PC-3 (cell line): ENCODE measurements at regions of chr16 and their contacts with region 1.

Region 1: DNA sequence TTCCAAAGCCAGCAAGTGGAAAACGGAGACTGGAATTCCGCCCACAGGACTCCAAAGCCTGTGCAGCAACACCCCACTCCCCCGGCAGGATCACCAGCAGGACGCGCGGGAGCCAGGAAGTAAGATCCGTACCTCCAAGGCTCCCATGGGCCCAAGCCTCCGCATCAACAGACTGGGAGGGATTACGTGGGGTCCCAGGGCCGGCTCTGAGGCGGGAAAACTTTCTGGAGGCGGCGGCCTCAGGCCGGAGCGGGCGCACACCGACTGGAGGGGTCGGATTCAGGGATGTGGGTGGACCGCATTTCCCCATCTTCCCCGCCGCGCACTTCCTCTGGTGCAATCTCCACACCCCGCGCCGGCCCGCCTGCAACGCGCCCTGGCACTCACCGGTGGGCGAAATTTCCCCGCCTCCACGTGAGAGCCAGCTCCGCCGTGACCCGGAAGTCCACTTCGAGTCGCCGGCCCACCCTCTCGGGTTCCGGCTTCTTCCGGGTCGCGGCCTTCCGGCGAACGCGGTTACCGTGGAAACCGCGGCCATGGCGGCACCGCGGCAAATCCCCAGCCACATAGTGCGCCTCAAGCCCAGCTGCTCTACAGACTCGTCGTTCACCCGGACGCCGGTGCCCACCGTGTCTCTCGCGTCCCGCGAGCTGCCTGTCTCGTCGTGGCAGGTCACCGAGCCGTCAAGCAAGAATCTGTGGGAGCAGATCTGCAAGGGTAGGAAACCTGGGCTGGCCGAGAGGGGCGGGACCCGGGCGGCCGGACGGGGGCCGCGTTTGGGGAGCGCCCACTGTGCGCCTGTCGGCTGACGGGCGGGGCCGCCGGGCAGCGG is at the starts of genes IQCK and KNOP1:
- DNase-seq: peak; percentile 77
- ATAC-seq: peak; percentile 83
- H3K4me3 ChIP-seq: peak within 1 kb of the TSS; percentile 97
- H3K27ac ChIP-seq: peak within 1 kb of the TSS; percentile 73
- H3K4me1 ChIP-seq: peaks cover 22% of the 10 kb centered on the region
- H3K27me3 ChIP-seq: no peaks in the 10 kb centered on the region
- CTCF ChIP-seq: no peak
- total RNA-seq, gene IQCK: 3.3 and 8.9 TPM in 2 replicates
- total RNA-seq, gene KNOP1: 13.6 and 18.8 TPM in 2 replicates

Region 2: GRCh38 chr16:19563377-19563776 is 154.6 kb before region 1 on chr16:
- CTCF ChIA-PET with region 1: no interaction called
- POLR2A ChIA-PET with region 1: no interaction called
- intact Hi-C with region 1: no loop called
- DNase-seq: no peak
- ATAC-seq: no peak
- H3K4me3 ChIP-seq: no peak overlapping the region
- H3K27ac ChIP-seq: no peak overlapping the region
- H3K4me1 ChIP-seq: no peaks in the 10 kb centered on the region
- H3K27me3 ChIP-seq: no peaks in the 10 kb centered on the region
- CTCF ChIP-seq: no peak

Region 3: DNA sequence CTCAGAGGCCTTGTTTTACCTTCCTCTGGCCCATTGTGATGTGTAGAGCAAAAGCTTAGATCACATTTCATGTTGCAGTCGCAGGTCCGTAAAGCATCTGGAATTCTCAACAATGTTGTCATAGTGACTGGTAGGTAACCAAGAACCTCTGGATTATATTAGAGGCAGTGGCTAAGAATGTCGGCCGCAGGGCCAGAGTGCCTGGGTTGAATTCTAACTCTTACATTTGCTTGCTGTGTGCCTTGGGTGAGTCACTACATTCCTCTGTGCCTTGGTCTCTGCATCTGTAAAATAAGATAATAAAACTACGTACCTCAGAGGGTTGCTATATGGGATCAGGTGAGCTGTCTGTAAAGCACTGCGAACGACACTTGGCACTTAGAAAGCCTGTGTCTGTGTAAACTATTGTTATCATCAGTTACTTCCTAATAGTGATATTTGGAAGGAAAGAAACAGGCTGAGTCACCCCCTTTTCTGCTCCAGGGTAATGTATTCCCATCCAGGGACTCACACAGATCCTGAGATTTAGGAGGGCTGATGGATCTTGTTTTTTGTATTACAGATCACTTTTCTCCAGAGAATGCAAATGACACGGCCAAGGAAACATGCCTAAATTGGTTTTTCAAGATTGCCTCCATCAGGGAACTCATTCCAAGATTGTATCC is 110.2 kb before region 1 on chr16:
- CTCF ChIA-PET with region 1: no interaction called
- POLR2A ChIA-PET with region 1: no interaction called
- intact Hi-C with region 1: loop called (anchors 5 kb)
- DNase-seq: peak; percentile 87
- ATAC-seq: peak; percentile 93
- H3K4me3 ChIP-seq: no peak overlapping the region
- H3K27ac ChIP-seq: peak overlapping the region; percentile 45
- H3K4me1 ChIP-seq: peaks cover 35% of the 10 kb centered on the region
- H3K27me3 ChIP-seq: no peaks in the 10 kb centered on the region
- CTCF ChIP-seq: no peak

Region 4: GRCh38 chr16:19696328-19696727 is 21.7 kb before region 1 on chr16:
- CTCF ChIA-PET with region 1: no interaction called
- POLR2A ChIA-PET with region 1: no interaction called
- intact Hi-C with region 1: loop called (anchors 2 kb)
- DNase-seq: peak; percentile 83
- ATAC-seq: peak; percentile 68
- H3K4me3 ChIP-seq: no peak overlapping the region
- H3K27ac ChIP-seq: peak overlapping the region; percentile 69
- H3K4me1 ChIP-seq: peaks cover 45% of the 10 kb centered on the region
- H3K27me3 ChIP-seq: no peaks in the 10 kb centered on the region
- CTCF ChIP-seq: no peak

Region 5: GRCh38 chr16:19753815-19754643 is 36.0 kb after region 1 on chr16:
- CTCF ChIA-PET with region 1: no interaction called
- POLR2A ChIA-PET with region 1: no interaction called
- intact Hi-C with region 1: loop called (anchors 2 kb)
- DNase-seq: peak; percentile 74
- ATAC-seq: peak; percentile 93
- H3K4me3 ChIP-seq: peak overlapping the region; percentile 36; the same call in 1 of the 2 replicates
- H3K27ac ChIP-seq: peak overlapping the region; percentile 60
- H3K4me1 ChIP-seq: peaks cover 28% of the 10 kb centered on the region
- H3K27me3 ChIP-seq: no peaks in the 10 kb centered on the region
- CTCF ChIP-seq: no peak

Region 6: DNA sequence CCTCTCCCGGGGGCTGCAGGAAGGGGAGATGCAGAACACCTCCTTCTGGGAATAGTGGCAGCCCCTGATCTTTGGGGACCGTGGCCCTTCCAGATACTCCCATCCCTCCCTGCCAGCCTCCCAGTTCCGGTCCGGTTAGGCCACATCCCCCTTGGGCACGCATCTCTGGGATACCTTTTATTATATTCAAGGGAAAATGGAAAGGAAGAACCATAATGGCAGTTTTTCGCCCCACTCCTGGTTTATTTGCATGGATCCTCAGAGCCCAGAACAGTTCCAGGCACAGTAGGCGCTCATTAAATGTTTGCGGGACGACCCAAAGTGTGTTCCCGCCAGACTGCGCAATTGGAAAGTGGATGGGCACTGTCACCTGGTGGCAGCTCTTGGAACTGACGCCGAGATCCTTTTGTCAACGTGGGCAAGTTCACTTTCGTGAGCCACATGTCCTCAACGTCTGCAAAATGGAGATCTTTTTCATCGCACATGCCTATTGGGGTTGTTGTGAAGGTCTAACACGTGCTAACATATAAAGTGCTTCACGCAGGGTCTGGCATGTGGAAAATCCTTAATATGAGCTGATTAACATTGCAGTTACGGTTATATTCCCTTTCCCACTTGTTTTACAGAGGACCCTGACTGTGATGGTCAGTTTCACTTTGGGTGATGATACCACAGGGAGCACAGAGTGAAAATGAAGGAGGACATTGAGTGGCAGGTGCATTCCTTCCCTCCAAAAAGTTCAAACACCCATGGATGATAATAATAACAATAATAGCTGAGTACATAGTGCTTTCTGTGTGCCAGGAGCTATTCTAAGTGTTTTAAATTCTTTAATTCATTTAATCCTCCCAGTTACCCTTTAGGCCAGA is 168.3 kb after region 1 on chr16:
- CTCF ChIA-PET with region 1: no interaction called
- POLR2A ChIA-PET with region 1: no interaction called
- intact Hi-C with region 1: loop called (anchors 2 kb)
- DNase-seq: peak; percentile 83
- ATAC-seq: peak; percentile 36
- H3K4me3 ChIP-seq: no peak overlapping the region
- H3K27ac ChIP-seq: no peak overlapping the region
- H3K4me1 ChIP-seq: peaks cover 4% of the 10 kb centered on the region; the same call in 1 of the 2 replicates
- H3K27me3 ChIP-seq: no peaks in the 10 kb centered on the region
- CTCF ChIP-seq: peak; percentile 95